Colonic mucosa (tissue), 4 donors: ENCODE measurements at regions of chr2 and their contacts with region 1.

Region 1: DNA sequence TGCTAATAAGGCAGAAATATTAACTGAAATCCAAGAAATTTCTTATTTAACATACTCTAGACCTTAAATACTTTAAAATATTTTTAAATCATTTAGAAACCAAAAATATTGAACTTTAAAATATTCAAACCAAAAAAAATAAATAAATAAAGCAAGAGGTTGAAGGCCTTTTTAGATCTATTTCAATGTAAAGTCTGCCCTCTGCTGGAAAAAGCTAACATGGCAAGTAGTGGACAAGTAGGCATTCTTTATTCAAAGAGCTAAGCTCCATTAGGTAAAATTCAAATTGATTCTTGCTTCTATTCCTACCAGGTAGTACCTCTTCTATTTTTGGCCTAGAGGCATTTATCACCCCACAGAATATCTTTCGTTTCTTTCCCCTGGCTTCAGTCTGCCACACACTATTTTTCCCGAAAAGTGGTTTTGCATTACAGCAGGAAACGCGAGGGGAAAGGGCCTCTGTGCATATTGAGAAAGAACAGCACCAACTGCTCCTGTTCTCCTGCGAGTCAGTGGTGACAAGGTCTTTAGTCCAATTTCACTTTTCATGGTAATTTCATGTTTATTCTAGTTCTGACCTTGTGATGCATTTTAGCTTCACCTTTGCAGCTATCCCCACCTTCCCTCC is 20.4 kb downstream of the IFIH1 start:
- DNase-seq: peak; percentile 85
- H3K4me3 ChIP-seq: no peak overlapping the region
- H3K27ac ChIP-seq: no peak overlapping the region
- H3K4me1 ChIP-seq: no peaks in the 10 kb centered on the region
- H3K27me3 ChIP-seq: no peaks in the 10 kb centered on the region
- CTCF ChIP-seq: peak; percentile 79

Region 2: DNA sequence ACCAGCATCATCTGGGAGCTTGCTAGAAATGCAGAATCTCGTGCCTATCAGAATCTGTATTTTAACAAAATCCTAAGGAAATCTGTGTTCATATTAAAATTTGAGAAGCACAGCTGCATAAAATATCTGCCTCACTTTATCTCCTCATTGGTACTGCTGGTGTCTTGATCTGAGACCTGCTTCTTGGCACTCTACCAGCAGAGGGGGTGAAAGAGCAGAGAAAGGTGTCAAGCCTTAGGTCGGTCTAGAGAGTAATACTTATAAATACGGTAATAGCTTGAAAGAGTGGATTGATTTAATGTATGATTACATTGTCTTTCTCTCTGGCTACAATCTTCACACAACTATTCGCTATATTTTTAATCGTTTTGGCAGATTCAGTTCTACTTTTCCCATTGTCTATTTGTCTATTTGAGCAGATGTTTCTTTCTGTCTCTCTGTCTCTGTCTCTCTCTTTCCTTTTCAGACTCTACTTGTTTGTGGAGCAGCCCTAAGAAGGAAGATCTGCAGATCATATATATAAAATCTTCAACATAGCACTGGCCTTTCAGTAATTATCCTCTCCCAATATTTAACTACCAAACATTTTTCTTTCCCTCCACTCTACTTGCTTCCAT is 144.3 kb before region 1 on chr2:
- intact Hi-C with region 1: loop called (anchors 2 kb)
- DNase-seq: peak; percentile 79
- H3K4me3 ChIP-seq: no peak overlapping the region
- H3K27ac ChIP-seq: no peak overlapping the region
- H3K4me1 ChIP-seq: no peaks in the 10 kb centered on the region
- H3K27me3 ChIP-seq: no peaks in the 10 kb centered on the region
- CTCF ChIP-seq: peak; percentile 59

Region 3: GRCh38 chr2:162221064-162221463 is 77.0 kb before region 1 on chr2:
- intact Hi-C with region 1: loop called (anchors 5 kb)
- DNase-seq: peak; percentile 60
- H3K4me3 ChIP-seq: no peak overlapping the region
- H3K27ac ChIP-seq: no peak overlapping the region
- H3K4me1 ChIP-seq: no peaks in the 10 kb centered on the region
- H3K27me3 ChIP-seq: no peaks in the 10 kb centered on the region
- CTCF ChIP-seq: peak; percentile 73

Region 4: GRCh38 chr2:162475661-162476060 is 177.6 kb after region 1 on chr2:
- intact Hi-C with region 1: no loop called
- DNase-seq: no peak
- H3K4me3 ChIP-seq: no peak overlapping the region
- H3K27ac ChIP-seq: no peak overlapping the region
- H3K4me1 ChIP-seq: no peaks in the 10 kb centered on the region
- H3K27me3 ChIP-seq: no peaks in the 10 kb centered on the region
- CTCF ChIP-seq: no peak